ENCODE measurements at regions of chr11 and their contacts with region 1.

Region 1: DNA sequence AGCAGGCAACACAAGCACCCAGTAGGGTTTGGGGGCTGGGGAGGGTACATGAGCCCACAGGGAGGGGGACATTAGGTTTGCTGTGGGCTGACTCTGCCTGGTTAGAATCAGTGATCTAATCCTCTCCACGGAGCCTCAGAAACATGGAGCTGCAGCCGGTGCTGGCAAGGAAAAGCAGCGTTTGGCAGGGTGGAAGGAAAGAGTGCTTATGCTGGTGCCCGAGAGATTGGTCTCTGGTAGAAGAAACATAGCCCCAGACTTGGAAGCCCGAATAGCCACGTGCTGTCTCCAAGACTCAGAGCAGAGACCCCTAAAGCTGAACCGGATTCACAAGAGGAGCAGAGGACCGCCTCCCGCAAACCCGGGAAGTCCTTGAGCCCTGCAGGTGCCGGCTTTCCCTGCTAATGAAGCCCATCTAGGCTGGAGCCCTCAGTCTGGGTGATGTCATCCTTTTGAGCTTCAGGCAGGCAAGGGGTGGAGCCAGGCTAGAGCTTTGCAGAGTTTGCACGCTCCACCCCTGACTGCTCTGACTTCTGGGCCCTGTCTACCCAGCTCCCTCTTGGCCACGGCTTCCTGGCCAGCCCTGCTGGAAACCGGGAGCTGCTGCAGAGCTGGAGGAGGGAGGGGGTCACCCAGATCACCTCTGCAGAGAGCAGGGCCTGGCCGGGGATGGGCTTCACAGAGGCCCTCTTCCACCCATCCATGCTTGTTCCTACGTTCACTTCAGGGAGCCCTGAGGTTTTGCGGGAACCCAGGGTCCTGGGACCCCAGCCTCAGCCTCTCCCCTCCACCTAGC is 35.0 kb upstream of the JAM3 start:
- DNase-seq: peak; percentile 47 to 97 (median 74)

Region 2: GRCh38 chr11:133947321-133947756 is 86.6 kb before region 1 on chr11:
- intact Hi-C with region 1: loop called (anchors 5 kb)
- DNase-seq: peak in 7 of 10 donors; percentile 59 to 95 (median 76)

Region 3: DNA sequence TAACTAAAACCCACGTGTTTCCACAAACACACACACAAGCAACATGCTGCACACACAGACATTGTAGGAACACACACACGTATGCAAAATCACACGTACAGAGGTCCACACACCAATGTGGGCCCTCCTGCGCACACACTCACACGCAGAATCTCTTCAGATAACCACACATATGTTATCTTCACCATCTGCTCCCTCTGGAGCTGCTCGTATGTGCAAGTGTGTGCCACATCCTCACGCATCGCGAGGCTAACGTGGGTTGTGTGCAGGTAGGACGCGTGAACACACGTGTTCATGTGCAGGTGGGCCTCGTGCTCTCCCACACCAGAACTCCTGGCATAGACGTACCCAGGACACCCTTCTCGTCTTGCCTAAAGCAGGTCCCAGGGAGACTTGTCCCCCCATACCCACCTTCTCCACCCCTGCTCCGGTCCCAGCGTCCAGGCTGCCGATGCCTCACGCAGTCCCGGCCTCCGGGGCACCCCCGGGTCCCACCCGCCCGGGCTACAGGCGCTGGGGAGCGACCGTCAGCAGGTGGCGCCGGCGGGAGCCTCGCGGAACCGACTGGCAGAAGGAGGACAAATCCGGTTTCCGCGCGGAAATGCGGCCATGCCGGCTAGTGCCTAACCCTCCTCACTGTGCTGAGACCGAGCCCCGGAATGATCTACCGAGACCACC is 66.8 kb before region 1 on chr11:
- intact Hi-C with region 1: loop called (anchors 5 kb)
- DNase-seq: peak; percentile 52 to 96 (median 73)

Region 4: DNA sequence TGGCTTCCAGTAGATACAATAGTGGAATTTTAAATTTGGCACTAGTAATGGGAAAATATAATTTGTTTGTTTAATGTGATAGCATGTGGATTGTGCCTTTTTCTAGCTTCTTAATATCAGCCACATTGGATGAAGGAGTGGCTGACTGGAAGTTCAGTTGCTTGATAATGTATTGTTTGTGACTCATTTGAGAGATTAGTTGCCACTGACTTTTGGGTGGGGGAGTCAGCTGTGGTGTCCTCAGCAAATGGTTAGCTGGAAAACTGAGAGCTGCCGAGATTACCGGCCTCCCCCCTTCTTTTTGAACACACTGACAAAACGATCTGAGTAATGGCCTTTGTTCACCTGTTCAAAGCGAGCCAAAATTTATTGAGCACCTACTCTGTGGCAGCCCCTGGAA is 40.5 kb after region 1 on chr11:
- intact Hi-C with region 1: no loop called
- DNase-seq: no peak

Region 5: DNA sequence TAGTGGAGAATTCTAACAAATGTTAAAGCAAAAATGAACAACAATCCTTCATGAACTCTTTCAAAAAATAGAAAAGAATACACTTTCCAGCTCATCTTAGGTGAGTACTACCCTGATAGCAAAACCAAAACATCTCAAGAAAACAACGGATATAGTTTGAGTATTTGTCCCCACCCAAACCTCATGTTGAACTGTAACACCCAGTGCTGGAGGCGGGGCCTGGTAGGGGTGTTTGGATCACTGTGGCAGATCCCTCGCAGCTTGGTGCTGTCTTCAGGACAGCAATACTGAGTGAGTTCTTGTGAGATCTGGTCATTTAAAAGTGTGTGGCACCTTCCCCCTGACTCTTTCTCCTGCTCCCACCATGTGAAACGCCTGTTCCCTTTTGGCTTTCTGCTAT is 162.9 kb after region 1 on chr11:
- intact Hi-C with region 1: no loop called
- DNase-seq: no peak